ENCODE measurements at regions of chr16 and their contacts with region 1.

Region 1: GRCh38 chr16:2777231-2777902 is at the start of gene ELOB:
- DNase-seq: peak; percentile 92
- ATAC-seq: peak; percentile 93
- H3K4me3 Mint-ChIP-seq: peak within 1 kb of the TSS; percentile 90
- H3K27ac Mint-ChIP-seq: peak within 1 kb of the TSS; percentile 98
- H3K4me1 Mint-ChIP-seq: peaks cover 24% of the 10 kb centered on the region
- H3K27me3 Mint-ChIP-seq: no peaks in the 10 kb centered on the region
- CTCF ChIP-seq: no peak
- total RNA-seq, gene ELOB: 174 to 178 TPM

Region 2: GRCh38 chr16:2764718-2765117 is 12.6 kb before region 1 on chr16:
- CTCF ChIA-PET with region 1: interaction called, 6 read pairs
- POLR2A ChIA-PET with region 1: interaction called, 17 read pairs
- intact Hi-C with region 1: no loop called
- DNase-seq: no peak
- ATAC-seq: no peak
- H3K4me3 Mint-ChIP-seq: no peak overlapping the region
- H3K27ac Mint-ChIP-seq: no peak overlapping the region
- H3K4me1 Mint-ChIP-seq: peaks cover 5% of the 10 kb centered on the region
- H3K27me3 Mint-ChIP-seq: no peaks in the 10 kb centered on the region
- CTCF ChIP-seq: no peak